ENCODE measurements at regions of chr20 and their contacts with region 1.

Region 1: DNA sequence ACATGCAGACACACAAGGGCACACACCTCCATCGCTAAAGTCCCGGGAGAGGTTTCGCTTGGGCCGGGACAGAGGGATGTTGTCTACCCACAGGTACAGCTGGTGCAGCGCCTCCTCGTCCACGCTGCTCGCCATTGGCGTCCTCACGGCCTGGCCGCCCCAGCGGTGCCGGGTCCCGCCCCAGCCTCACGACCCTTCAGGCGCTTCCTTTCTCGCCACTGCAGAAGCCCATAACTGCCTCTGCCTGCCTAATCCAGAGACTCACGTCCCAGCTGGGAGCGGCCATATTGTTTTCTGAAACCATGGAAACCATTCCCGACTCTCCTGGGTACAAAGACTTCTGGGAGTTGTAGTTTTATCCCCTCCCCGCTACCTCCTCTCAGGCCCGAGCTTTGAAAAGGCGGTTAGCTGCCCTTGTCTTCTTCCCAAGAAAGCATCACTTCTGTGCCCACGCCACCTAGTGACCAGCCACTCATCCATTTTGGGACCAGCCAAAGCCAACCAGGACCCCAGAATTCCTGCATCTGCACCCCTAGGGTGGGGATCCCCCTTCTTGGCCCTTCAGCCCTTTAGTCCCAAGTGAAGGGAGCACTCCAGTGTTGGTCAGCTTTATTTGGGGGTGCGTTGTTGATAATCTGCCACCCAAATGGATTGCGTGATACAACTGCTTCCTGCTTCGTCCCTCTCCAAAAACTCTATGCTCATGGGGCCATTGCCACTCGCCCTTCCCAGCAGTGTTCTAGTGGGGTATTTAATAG is at the start of gene SPEF1:
- DNase-seq: peak; percentile 98
- ATAC-seq: peak; percentile 78
- H3K4me3 ChIP-seq: peak within 1 kb of the TSS; percentile 73
- H3K27ac ChIP-seq: no peak within 1 kb of the TSS
- H3K4me1 ChIP-seq: peaks cover 32% of the 10 kb centered on the region
- H3K27me3 ChIP-seq: no peaks in the 10 kb centered on the region
- CTCF ChIP-seq: peak; percentile 91
- total RNA-seq, gene SPEF1: 2.0 and 2.6 TPM in 2 replicates

Region 2: DNA sequence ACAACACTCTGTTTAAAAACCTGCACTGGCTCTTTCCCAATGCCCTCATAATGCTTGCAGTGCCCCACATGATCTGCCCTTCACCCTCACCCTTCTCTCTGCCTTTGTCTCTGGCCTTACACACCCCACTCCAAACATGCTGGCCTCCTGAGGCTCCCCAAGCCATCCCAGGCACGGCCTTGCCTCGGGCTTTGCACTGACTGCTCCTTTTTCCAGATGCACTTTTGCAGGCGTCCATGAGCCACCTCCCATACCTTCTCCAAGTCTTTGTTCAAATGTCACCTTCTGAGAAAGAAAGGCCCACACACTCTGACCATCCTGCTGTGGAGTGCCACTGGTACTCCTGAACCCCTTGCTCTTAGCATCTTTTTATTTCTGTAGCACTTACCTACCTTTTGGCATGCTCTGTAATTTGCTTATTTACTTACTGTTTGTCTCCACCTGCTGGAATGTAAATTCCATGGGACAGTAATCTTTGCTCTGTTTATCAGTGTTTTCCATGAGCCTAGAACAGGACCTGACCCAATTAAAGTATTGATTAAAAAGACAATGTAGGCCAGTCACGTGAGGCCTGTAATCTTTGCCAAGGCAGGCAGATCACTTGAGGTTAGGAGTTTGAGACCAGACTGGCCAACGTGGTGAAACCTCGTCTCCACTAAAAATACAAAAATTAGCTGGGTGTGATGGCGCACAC is 148.9 kb before region 1 on chr20:
- CTCF ChIA-PET with region 1: no interaction called
- POLR2A ChIA-PET with region 1: no interaction called
- intact Hi-C with region 1: no loop called
- DNase-seq: peak; percentile 32
- ATAC-seq: peak; percentile 29; the same call in 1 of the 2 replicates
- H3K4me3 ChIP-seq: no peak overlapping the region
- H3K27ac ChIP-seq: no peak overlapping the region
- H3K4me1 ChIP-seq: no peaks in the 10 kb centered on the region
- H3K27me3 ChIP-seq: no peaks in the 10 kb centered on the region
- CTCF ChIP-seq: peak; percentile 60

Region 3: GRCh38 chr20:3679749-3680700 is 101.3 kb before region 1 on chr20:
- CTCF ChIA-PET with region 1: interaction called, 11 read pairs
- POLR2A ChIA-PET with region 1: no interaction called
- intact Hi-C with region 1: no loop called
- DNase-seq: no peak
- ATAC-seq: no peak
- H3K4me3 ChIP-seq: no peak overlapping the region
- H3K27ac ChIP-seq: no peak overlapping the region
- H3K4me1 ChIP-seq: peaks cover 3% of the 10 kb centered on the region; the same call in 1 of the 2 replicates
- H3K27me3 ChIP-seq: peaks cover 24% of the 10 kb centered on the region
- CTCF ChIP-seq: no peak

Region 4: DNA sequence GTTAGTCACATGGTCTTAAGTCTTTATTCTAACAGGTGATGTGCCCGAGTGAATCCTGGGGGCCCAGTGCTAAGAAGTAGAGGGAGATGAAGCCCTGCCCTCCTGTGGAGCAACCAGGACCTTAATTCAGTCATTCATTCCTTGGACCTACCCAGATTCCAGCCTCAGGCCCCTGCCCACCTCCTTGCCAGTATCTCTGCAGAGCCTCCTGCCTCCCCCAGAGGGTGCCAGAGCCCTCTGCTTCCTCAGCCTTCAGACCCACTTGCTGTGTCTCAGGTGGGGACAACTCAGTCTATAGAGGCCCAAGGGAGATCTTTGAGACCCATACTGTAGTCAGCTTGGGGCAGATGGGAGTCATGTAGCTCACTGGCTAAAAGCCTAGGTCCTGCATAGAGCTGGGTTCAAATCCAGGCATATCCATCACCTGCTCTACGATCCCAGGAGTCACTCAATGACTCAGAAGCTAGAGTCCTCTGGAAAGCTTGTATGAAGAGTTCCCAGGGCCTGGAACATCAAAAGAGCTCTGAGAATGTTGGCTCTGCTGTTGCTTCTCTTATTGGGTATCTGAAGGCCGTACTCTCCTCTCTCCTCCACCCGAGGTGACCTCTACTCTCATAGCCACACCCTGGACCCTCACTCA is 65.0 kb before region 1 on chr20:
- CTCF ChIA-PET with region 1: interaction called, 11 read pairs
- POLR2A ChIA-PET with region 1: no interaction called
- intact Hi-C with region 1: loop called (anchors 1 kb)
- DNase-seq: peak; percentile 64
- ATAC-seq: peak; percentile 93
- H3K4me3 ChIP-seq: no peak overlapping the region
- H3K27ac ChIP-seq: no peak overlapping the region
- H3K4me1 ChIP-seq: no peaks in the 10 kb centered on the region
- H3K27me3 ChIP-seq: peaks cover 8% of the 10 kb centered on the region; the same call in 1 of the 2 replicates
- CTCF ChIP-seq: peak; percentile 92

Region 5: DNA sequence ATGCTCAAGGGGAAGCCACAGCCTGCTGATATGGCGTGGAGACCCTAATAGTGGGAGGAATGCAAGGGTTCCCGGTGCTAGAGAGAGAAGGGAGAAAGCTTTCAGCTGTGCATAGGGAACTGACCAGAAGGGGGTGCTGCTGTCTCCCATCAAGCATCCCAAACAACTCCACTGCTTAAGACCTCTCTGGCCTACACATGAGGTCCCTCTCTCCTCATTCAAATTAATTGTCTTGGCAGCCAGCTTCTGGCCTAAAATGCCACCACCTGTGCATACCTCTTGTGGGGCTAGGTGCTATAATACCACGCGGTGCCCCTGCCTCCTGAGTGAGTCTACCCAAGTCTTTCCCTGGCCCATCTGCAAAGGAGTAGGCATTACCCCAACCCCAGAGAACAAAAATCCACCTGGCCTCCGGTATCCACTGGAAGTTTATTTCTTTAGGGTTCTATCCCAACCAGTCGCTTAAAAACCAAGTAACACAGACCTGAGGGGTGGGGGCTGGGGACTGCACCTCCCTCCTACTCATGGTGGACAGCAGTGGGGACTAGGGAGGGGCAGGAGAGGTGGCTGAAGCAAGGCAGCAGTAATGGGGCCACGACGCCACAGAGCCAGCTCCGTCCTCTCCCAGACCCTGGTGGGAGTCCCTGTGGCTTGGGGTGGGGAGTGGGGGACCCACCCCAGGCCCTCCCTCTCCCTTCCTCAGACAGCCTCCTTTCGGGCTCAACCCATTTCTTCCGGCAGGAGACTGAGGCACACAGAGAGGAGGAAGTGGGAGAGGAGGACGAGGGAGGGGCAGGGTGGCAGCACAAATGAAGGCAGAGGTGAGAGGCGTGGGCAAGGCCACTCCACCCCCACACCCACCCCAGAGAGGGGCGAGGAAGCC is 28.0 kb before region 1 on chr20:
- CTCF ChIA-PET with region 1: interaction called, 5 read pairs
- POLR2A ChIA-PET with region 1: no interaction called
- intact Hi-C with region 1: loop called (anchors 1 kb)
- DNase-seq: peak; percentile 68
- ATAC-seq: peak; percentile 80
- H3K4me3 ChIP-seq: no peak overlapping the region
- H3K27ac ChIP-seq: no peak overlapping the region
- H3K4me1 ChIP-seq: no peaks in the 10 kb centered on the region
- H3K27me3 ChIP-seq: no peaks in the 10 kb centered on the region
- CTCF ChIP-seq: peak; percentile 88